HEK293 (cell line): ENCODE measurements at regions of chr15 and their contacts with region 1.

Region 1: DNA sequence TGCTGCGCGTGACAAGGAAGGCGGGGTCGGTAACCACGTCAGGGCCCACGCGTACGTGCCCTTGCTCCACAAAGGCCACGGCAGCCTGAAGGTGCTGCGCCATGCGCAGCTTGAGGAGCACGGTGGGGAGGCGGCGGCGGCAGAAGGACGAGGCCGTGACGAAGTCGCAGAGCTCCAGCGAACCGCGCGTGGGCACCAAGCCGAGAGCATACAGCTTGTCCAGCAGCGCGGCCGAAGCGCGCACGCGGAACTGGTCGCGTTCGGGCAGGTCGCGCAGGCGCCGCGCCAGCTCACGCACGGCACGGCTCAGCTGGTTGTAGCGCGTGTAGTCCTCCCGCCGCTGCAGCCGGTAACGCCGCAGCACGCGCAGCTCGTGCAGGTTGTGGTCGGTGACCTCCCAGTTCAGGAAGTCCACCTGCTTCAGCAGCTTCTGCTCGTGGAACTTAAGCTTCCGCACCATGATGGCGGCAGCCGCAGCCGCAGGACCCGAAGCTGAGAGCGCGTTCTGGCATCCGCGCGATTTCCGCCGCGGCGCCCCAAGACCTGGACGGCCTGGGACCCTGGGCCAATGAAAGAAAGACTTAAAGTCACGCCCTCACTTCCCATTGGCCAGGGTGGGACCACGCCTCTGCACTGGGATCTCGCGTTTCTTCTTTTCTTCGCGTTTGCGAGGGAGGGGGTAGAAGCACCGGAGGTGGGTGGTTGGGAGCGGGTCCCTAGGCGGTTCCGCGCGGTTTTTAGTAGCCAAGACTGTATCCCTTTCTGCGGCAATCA is at the start of gene IMP3:
- H3K4me3 ChIP-seq: peak within 1 kb of the TSS; percentile 58
- H3K27ac ChIP-seq: peak within 1 kb of the TSS; percentile 94
- H3K4me1 ChIP-seq: peaks cover 7% of the 10 kb centered on the region
- CTCF ChIP-seq: peak; percentile 63

Region 2: DNA sequence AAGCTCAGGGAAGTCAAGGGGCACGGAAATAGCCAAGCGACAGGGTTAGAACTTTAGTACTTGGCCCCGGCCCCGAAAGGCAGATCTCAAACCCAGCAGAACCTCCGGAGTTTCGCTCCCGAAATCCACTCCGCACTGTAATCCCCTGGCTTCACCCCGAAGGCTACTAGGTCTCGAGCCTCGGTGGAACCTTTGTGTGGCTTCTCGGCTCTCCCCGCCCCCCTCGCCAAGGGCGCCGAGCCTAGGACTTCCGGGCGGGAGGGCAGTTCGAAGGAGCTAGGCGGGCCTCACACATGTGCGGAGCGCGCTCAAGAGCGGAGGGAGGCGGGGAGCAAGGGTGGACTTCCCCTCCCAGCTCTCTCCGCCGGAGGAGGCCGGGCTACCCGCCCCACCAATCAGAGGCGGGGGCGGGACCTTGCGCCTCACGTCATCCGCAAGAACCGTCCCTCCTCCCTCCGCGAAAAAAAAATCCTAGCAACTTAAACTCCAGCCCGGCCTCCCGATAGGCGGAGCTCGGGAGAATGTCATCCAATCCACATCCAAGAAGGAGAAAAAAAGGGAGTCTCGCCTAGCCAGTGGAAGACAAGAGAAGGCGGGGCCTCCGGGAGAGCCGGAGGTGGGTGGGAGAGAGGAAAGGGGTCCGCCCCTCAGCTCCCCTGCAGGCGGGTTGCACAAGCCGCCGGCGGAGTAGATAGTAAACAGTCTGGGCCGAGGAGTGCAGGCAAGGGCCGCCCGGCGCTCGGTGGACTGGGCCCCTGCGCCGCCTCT is 186.0 kb before region 1 on chr15:
- CTCF ChIA-PET with region 1: interaction called, 6 read pairs
- POLR2A ChIA-PET with region 1: interaction called, 94 read pairs
- H3K4me3 ChIP-seq: peak overlapping the region; percentile 70
- H3K27ac ChIP-seq: peak overlapping the region; percentile 87
- H3K4me1 ChIP-seq: peaks cover 15% of the 10 kb centered on the region
- CTCF ChIP-seq: no peak

Region 3: DNA sequence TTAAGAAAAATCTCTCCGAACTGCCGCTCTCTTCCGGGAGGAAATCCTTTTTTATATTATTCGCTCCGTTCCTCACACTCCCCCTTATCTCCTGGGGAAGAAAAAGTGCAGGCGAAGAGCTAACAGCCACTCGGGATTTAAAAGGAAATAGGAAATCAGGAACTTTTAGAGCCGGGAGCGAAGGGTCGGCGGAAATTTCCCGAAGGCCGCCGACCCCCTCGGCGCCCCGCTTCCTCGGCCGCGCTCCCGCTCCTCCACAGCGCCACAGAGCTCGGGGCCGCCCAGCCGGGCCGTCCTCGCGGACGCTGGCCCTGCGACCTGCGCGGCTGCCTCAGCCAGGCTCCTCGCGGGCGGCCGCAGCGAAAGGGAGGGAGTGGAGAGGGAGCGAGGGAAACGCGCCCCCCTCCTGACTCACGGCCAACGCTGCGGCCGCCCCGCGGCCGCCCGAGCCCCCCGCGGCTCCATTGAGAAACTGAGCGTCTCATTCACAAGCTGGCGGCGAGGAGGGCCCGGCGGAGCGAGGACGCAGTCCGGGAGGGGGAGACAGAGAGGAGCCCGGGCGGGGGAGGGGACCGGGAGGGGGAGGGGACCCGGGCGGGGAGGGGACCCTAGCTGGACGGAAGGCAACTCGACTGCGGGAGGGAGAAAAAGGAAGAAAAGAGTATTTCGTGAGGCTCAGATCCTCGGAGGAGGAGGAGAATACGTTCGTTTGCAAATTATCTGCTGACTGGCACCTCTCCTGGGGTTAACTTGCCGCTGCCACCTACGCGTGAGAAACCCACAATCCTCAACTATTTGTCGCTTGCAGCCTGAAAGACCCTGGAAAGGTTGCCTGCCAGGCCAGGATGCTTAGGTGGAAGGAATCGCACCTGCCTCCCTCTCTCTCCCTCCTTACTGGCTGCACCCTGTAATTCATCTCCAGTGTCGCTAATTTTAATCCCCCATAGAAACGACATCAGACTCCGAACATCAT is 60.7 kb before region 1 on chr15 and contains the start of gene PTPN9:
- CTCF ChIA-PET with region 1: interaction called, 5 read pairs
- POLR2A ChIA-PET with region 1: interaction called, 14 read pairs
- H3K4me3 ChIP-seq: peak within 1 kb of the TSS; percentile 84
- H3K27ac ChIP-seq: peak within 1 kb of the TSS; percentile 96
- H3K4me1 ChIP-seq: peaks cover 14% of the 10 kb centered on the region
- CTCF ChIP-seq: peak; percentile 79

Region 4: GRCh38 chr15:75591655-75592364 is 48.1 kb before region 1 on chr15:
- CTCF ChIA-PET with region 1: no interaction called
- POLR2A ChIA-PET with region 1: no interaction called
- H3K4me3 ChIP-seq: no peak overlapping the region
- H3K27ac ChIP-seq: no peak overlapping the region
- H3K4me1 ChIP-seq: no peaks in the 10 kb centered on the region
- CTCF ChIP-seq: no peak

Region 5: GRCh38 chr15:75625542-75626347 is 14.2 kb before region 1 on chr15 and contains the start of gene SNUPN:
- CTCF ChIA-PET with region 1: interaction called, 32 read pairs
- POLR2A ChIA-PET with region 1: interaction called, 85 read pairs
- H3K4me3 ChIP-seq: peak within 1 kb of the TSS; percentile 96
- H3K27ac ChIP-seq: peak within 1 kb of the TSS; percentile 96
- H3K4me1 ChIP-seq: no peaks in the 10 kb centered on the region; the same call in 1 of the 2 replicates
- CTCF ChIP-seq: peak; percentile 6; the same call in 1 of the 2 replicates

Region 6: GRCh38 chr15:75672646-75673425 is 32.9 kb after region 1 on chr15:
- CTCF ChIA-PET with region 1: interaction called, 4 read pairs
- POLR2A ChIA-PET with region 1: interaction called, 36 read pairs
- H3K4me3 ChIP-seq: no peak overlapping the region
- H3K27ac ChIP-seq: peak overlapping the region; percentile 36; the same call in 1 of the 2 replicates
- H3K4me1 ChIP-seq: peaks cover 10% of the 10 kb centered on the region
- CTCF ChIP-seq: 0 out of 2 replicates have a peak, but pooled peaks have one; percentile 38

Region 7: GRCh38 chr15:75684642-75685041 is 44.7 kb after region 1 on chr15:
- CTCF ChIA-PET with region 1: interaction called, 7 read pairs
- POLR2A ChIA-PET with region 1: interaction called, 10 read pairs
- H3K4me3 ChIP-seq: no peak overlapping the region
- H3K27ac ChIP-seq: no peak overlapping the region
- H3K4me1 ChIP-seq: no peaks in the 10 kb centered on the region
- CTCF ChIP-seq: peak; percentile 46; the same call in 1 of the 2 replicates